ENCODE measurements at regions of chr11 and their contacts with region 1.

Region 1: GRCh38 chr11:44029977-44030911 is 17.5 kb upstream of the ACCSL start:
- DNase-seq: no peak
- ATAC-seq: peak; percentile 36 to 69 (median 53)
- H3K4me3 ChIP-seq: no peak overlapping the region
- H3K27ac ChIP-seq: peak overlapping the region; percentile 56
- H3K4me1 ChIP-seq: peaks cover 8% of the 10 kb centered on the region
- H3K27me3 ChIP-seq: no peaks in the 10 kb centered on the region
- CTCF ChIP-seq: no peak

Region 2: DNA sequence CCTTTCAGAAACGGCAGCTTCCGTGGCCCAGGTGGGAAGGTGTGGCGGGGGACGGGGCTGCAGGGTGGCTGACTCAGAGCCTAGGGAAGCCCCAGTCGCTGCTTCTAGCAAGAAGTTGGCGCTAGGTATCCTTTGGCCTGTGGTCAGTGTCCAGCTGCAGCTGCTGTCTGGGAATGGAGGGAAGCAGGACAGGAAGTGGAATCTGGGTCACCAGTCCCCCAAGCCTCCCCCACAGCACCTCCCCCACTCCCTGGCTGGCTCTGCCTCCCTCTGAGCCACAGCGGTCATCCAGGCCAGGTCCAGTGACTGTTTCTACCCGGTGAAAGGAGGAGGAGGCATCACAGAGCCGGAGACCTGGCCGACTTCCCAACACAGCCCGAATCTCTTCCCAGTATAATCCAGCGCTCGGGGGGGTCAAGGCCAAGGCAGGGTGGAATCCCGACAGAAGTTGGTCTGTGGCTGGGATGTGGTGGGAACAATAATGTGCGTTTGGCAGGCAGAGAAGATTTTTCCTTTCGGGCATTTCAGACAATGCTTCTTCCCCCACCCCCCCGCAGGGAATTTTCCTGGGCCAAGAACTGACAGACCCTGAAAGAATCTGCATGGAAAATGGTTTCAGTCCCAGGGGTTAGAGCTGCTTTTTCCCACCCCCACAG is 42.7 kb before region 1 on chr11:
- intact Hi-C with region 1: loop called in 1 of 2 experiments (anchors 5 kb)
- DNase-seq: peak; percentile 92 to 94
- ATAC-seq: peak; percentile 89 to 93 (median 90)
- H3K4me3 ChIP-seq: peak overlapping the region; percentile 10
- H3K27ac ChIP-seq: peak overlapping the region; percentile 72
- H3K4me1 ChIP-seq: peaks cover 41% of the 10 kb centered on the region
- H3K27me3 ChIP-seq: peaks cover 0 to 10% (median 0%) of the 10 kb centered on the region in 3 donors
- CTCF ChIP-seq: no peak

Region 3: DNA sequence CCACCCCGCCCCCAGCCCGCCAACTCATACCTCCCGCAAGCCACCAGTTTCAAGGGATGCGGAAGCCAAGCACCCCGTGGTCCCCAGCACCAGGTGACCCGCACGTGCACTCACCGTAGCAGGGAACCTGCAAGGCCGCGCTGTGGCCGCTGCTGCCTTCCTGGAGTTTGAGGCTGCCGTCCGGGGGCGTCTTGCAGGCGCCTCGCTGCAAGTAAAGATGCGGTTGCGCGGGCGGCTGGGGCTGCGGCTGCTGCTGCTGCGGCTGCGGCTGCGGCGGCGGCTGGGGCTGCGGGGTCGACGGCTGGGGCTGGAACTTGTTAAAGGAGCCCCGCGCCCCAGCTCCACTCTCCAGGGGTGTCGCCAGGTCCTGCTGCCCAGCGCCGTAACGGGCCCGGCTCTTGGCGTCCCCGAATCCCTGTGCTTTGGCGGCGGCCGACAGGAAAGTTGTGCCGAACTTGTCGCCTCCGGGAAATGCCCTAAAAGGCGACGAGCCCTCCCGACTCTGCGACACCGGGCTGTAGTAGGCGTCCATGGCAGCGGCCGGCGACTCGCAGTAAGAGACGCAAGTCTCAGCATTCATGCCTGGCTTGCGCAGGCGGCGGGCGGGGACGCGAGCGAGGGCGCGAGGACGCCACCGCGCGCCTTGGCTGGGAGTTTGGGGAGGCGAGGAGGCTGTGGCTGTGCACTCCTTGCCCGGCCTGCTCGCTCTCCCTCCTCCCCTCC is 279.4 kb after region 1 on chr11 and contains the start of gene ALX4:
- intact Hi-C with region 1: no loop called
- DNase-seq: peak in 1 of 2 donors; percentile 65
- ATAC-seq: peak; percentile 64 to 80 (median 78)
- H3K4me3 ChIP-seq: peak within 1 kb of the TSS; percentile 61
- H3K27ac ChIP-seq: no peak within 1 kb of the TSS
- H3K4me1 ChIP-seq: peaks cover 19% of the 10 kb centered on the region
- H3K27me3 ChIP-seq: peaks cover 0 to 99% (median 56%) of the 10 kb centered on the region in 3 donors
- CTCF ChIP-seq: no peak
- total RNA-seq, gene ALX4: 0.11 to 0.21 (median 0.17) TPM in 3 of 4 donors, not detected in the other

Region 4: GRCh38 chr11:44709966-44710365 is 679.7 kb after region 1 on chr11:
- intact Hi-C with region 1: no loop called
- DNase-seq: no peak
- ATAC-seq: no peak
- H3K4me3 ChIP-seq: no peak overlapping the region
- H3K27ac ChIP-seq: no peak overlapping the region
- H3K4me1 ChIP-seq: no peaks in the 10 kb centered on the region
- H3K27me3 ChIP-seq: peaks cover 0 to 8% (median 2%) of the 10 kb centered on the region in 3 donors
- CTCF ChIP-seq: no peak

Measured in psoas muscle (tissue), 8 donors.